ENCODE measurements at regions of chr16 and their contacts with region 1.

Region 1: GRCh38 chr16:71412270-71413160 is 29.3 kb downstream of the TLE7 start:
- DNase-seq: peak; percentile 78
- H3K4me3 Mint-ChIP-seq: no peak overlapping the region
- H3K27ac Mint-ChIP-seq: no peak overlapping the region
- H3K4me1 Mint-ChIP-seq: peaks cover 4% of the 10 kb centered on the region
- H3K27me3 Mint-ChIP-seq: peaks cover 36% of the 10 kb centered on the region

Region 2: GRCh38 chr16:71358464-71358998 is 54.0 kb before region 1 on chr16 and contains the start of gene CALB2:
- CTCF ChIA-PET with region 1: interaction called, 3 read pairs
- intact Hi-C with region 1: loop called (anchors 5 kb)
- DNase-seq: peak; percentile 62
- H3K4me3 Mint-ChIP-seq: no peak within 1 kb of the TSS
- H3K27ac Mint-ChIP-seq: no peak within 1 kb of the TSS
- H3K4me1 Mint-ChIP-seq: peaks cover 3% of the 10 kb centered on the region
- H3K27me3 Mint-ChIP-seq: peaks cover 23% of the 10 kb centered on the region
- total RNA-seq, gene CALB2: not detected

Region 3: DNA sequence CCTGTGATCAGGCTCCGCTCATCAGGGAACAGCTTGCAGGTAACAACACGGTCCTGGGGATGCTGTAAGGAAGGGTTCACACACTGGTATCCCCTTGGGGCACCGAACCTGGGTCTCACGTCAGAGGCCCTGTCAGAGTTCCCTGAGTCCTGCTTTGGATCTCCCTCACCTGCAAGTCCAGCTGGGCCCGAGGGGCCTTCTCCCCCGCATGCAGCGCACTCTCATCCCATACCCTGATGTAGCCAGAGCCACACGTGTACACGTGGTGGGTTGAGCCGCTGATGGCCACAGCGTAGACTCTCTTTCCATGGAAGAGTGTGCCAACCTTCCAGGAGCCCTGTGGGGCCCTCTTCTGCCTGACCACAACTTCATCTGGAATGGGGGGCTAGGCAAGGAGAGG is 19.4 kb after region 1 on chr16:
- CTCF ChIA-PET with region 1: interaction called, 11 read pairs
- intact Hi-C with region 1: no loop called
- DNase-seq: no peak
- H3K4me3 Mint-ChIP-seq: no peak overlapping the region
- H3K27ac Mint-ChIP-seq: no peak overlapping the region
- H3K4me1 Mint-ChIP-seq: no peaks in the 10 kb centered on the region
- H3K27me3 Mint-ChIP-seq: peaks cover 18% of the 10 kb centered on the region

Region 4: DNA sequence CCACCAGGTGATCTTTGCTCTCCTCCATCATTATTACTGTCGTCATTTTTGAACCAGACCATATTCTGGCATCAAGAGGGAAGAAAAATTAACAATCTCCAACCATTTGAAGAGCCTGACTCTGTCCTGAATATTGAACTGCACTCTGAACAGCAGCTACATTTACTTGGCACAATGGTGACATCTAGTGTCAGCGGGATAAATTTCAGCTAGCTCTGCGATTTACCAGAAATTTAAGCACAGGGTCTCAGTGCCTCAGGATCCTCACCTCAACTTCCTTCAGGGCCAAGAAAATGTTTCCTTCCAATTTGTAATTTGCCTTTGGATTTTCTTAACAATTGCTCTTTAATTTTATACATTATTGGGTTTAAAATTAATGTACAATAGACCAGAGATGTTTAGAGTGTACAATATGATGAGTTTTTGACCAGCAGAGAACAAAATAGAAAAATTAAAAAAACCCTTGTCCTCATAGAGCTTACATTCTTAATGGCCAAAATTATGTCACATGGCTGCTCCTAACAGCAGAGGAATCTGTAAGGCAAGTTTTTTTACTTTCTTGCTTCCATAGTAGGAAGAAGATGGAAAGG is 87.4 kb after region 1 on chr16:
- CTCF ChIA-PET with region 1: interaction called, 91 read pairs
- intact Hi-C with region 1: loop called (anchors 1 kb)
- DNase-seq: peak; percentile 71
- H3K4me3 Mint-ChIP-seq: no peak overlapping the region
- H3K27ac Mint-ChIP-seq: no peak overlapping the region
- H3K4me1 Mint-ChIP-seq: no peaks in the 10 kb centered on the region
- H3K27me3 Mint-ChIP-seq: no peaks in the 10 kb centered on the region

Region 5: DNA sequence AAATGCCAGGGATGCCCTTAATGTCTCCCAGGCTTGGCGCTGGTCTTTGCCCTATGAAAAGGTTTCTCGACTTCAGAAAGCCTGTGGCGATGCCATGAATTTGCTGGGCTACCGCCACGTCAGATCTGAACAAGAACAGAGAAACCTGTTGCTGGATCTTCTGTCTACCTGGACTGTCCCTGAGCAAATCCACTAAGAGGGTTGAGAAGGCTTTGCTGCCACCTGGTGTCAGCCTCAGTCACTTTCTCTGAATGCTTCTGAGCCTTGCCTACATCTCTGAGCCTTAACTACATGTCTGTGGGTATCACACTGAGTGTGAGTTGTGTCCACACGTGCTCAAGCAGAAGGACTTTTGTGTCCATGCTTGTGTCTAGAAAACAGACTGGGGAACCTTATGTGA is 125.1 kb after region 1 on chr16:
- CTCF ChIA-PET with region 1: interaction called, 9 read pairs
- intact Hi-C with region 1: loop called (anchors 2 kb)
- DNase-seq: peak; percentile 65
- H3K4me3 Mint-ChIP-seq: no peak overlapping the region
- H3K27ac Mint-ChIP-seq: no peak overlapping the region
- H3K4me1 Mint-ChIP-seq: no peaks in the 10 kb centered on the region
- H3K27me3 Mint-ChIP-seq: no peaks in the 10 kb centered on the region